Endothelial cell of umbilical vein (primary cell): ENCODE measurements at regions of chr6 and their contacts with region 1.

Region 1: GRCh38 chr6:30742316-30743098 is at the start of gene FLOT1:
- DNase-seq: peak; percentile 94
- H3K4me3 ChIP-seq: peak within 1 kb of the TSS; percentile 37 to 83 (median 80)
- H3K27ac ChIP-seq: peak within 1 kb of the TSS; percentile 89
- H3K4me1 ChIP-seq: peaks cover 47% of the 10 kb centered on the region
- H3K27me3 ChIP-seq: no peaks in the 10 kb centered on the region
- CTCF ChIP-seq: no peak
- POLR2A ChIP-seq: peak; percentile 83
- total RNA-seq, gene FLOT1: 141 and 145 TPM in 2 replicates

Region 2: DNA sequence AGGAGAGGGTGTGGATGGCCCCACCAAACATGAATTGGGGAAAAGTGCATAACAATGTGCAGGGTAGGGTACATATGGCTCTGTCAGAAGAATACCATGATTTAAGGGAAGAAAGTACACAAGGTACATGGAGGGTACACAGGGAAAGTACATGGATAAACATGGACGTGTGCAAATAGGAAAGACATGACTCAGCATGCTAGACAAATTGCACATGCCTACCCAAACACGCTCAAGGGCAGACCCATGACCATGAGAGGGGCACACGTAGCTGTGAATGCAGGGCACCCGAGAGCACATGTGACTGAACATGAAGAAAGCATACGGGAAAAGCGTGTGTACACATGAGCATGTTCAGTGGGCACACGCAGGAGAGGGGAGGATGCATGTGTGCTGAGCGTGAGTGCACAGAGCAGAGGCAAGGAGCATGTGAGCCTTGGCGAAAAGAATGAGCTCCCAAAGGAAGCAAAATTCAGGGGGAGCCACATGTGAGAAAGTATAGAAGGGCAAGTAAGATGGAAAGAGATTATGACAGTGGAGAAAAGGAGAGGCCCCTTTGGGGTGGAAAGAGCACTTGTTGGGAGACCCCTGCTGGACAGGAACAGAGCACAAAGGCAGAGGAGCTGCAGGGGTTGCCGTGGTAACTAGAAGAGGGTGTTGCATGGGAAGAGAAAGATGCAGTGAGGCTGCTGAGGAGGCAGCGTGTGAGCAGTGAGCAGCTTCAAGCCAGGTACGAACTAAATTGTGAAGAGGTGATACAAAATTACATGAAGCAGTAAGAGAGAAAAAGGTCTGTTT is 1139.7 kb before region 1 on chr6:
- CTCF ChIA-PET with region 1: no interaction called
- POLR2A ChIA-PET with region 1: no interaction called
- dilution Hi-C with region 1: no loop called
- intact Hi-C with region 1: no loop called
- DNase-seq: no peak
- H3K4me3 ChIP-seq: no peak overlapping the region
- H3K27ac ChIP-seq: no peak overlapping the region
- H3K4me1 ChIP-seq: no peaks in the 10 kb centered on the region
- H3K27me3 ChIP-seq: no peaks in the 10 kb centered on the region
- CTCF ChIP-seq: peak in 1 of 2 donors; percentile 17
- POLR2A ChIP-seq: no peak

Region 3: GRCh38 chr6:30340589-30341054 is 401.9 kb before region 1 on chr6:
- CTCF ChIA-PET with region 1: no interaction called
- POLR2A ChIA-PET with region 1: no interaction called
- dilution Hi-C with region 1: no loop called
- intact Hi-C with region 1: no loop called
- DNase-seq: no peak
- H3K4me3 ChIP-seq: no peak overlapping the region
- H3K27ac ChIP-seq: no peak overlapping the region
- H3K4me1 ChIP-seq: peaks cover 3% of the 10 kb centered on the region
- H3K27me3 ChIP-seq: no peaks in the 10 kb centered on the region
- CTCF ChIP-seq: no peak
- POLR2A ChIP-seq: no peak

Region 4: GRCh38 chr6:30656513-30656912 is 86.0 kb before region 1 on chr6:
- CTCF ChIA-PET with region 1: no interaction called
- POLR2A ChIA-PET with region 1: no interaction called
- dilution Hi-C with region 1: no loop called
- intact Hi-C with region 1: no loop called
- DNase-seq: no peak
- H3K4me3 ChIP-seq: no peak overlapping the region
- H3K27ac ChIP-seq: no peak overlapping the region
- H3K4me1 ChIP-seq: no peaks in the 10 kb centered on the region
- H3K27me3 ChIP-seq: no peaks in the 10 kb centered on the region
- CTCF ChIP-seq: no peak
- POLR2A ChIP-seq: no peak

Region 5: GRCh38 chr6:30678964-30679726 is 63.4 kb before region 1 on chr6:
- CTCF ChIA-PET with region 1: interaction called, 12 read pairs
- POLR2A ChIA-PET with region 1: no interaction called
- dilution Hi-C with region 1: no loop called
- intact Hi-C with region 1: no loop called
- DNase-seq: peak; percentile 85
- H3K4me3 ChIP-seq: peak overlapping the region in 2 of 3 experiments; percentile 8 to 27
- H3K27ac ChIP-seq: peak overlapping the region; percentile 2
- H3K4me1 ChIP-seq: peaks cover 31% of the 10 kb centered on the region
- H3K27me3 ChIP-seq: no peaks in the 10 kb centered on the region
- CTCF ChIP-seq: peak; percentile 95 to 96
- POLR2A ChIP-seq: no peak

Region 6: DNA sequence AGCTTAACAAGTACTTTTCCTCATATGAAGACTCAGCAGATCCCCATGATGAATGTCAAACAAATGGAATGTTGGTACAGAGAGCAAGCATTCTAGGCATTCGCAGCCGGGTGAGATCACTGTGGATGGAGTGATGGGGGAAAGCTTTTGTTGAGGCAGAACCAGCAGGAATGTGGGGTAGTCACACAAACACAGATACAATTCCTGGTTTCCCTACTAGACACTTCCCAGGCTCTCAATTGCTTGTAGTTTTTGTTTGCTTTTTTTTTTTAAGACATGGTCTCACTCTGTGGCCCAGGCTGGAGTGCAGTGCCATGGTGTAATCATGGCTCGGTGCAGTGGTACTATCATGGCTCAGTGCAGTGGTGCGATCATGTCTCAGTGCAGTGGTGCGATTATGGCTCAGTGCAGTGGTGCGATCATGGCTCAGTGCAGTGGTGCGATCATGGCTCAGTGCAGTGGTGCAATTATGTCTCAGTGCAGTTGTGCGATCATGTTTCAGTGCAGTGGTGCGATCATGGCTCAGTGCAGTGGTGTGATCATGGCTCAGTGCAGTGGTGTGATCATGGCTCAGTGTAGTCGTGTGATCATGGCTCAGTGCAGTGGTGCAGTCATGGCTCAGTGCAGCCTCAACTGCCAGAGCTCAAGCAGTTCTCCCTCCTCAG is 17.2 kb after region 1 on chr6:
- CTCF ChIA-PET with region 1: interaction called, 4 read pairs
- POLR2A ChIA-PET with region 1: interaction called, 6 read pairs
- dilution Hi-C with region 1: no loop called
- intact Hi-C with region 1: loop called (anchors 1 kb)
- DNase-seq: peak; percentile 74
- H3K4me3 ChIP-seq: no peak overlapping the region
- H3K27ac ChIP-seq: peak overlapping the region; percentile 91
- H3K4me1 ChIP-seq: peaks cover 34% of the 10 kb centered on the region
- H3K27me3 ChIP-seq: no peaks in the 10 kb centered on the region
- CTCF ChIP-seq: no peak
- POLR2A ChIP-seq: no peak

Region 7: GRCh38 chr6:30800871-30801270 is 58.4 kb after region 1 on chr6:
- CTCF ChIA-PET with region 1: no interaction called
- POLR2A ChIA-PET with region 1: interaction called, 14 read pairs
- dilution Hi-C with region 1: no loop called
- intact Hi-C with region 1: no loop called
- DNase-seq: peak; percentile 98
- H3K4me3 ChIP-seq: no peak overlapping the region
- H3K27ac ChIP-seq: peak overlapping the region; percentile 61
- H3K4me1 ChIP-seq: peaks cover 22% of the 10 kb centered on the region
- H3K27me3 ChIP-seq: no peaks in the 10 kb centered on the region
- CTCF ChIP-seq: no peak
- POLR2A ChIP-seq: peak; percentile 37

Region 8: DNA sequence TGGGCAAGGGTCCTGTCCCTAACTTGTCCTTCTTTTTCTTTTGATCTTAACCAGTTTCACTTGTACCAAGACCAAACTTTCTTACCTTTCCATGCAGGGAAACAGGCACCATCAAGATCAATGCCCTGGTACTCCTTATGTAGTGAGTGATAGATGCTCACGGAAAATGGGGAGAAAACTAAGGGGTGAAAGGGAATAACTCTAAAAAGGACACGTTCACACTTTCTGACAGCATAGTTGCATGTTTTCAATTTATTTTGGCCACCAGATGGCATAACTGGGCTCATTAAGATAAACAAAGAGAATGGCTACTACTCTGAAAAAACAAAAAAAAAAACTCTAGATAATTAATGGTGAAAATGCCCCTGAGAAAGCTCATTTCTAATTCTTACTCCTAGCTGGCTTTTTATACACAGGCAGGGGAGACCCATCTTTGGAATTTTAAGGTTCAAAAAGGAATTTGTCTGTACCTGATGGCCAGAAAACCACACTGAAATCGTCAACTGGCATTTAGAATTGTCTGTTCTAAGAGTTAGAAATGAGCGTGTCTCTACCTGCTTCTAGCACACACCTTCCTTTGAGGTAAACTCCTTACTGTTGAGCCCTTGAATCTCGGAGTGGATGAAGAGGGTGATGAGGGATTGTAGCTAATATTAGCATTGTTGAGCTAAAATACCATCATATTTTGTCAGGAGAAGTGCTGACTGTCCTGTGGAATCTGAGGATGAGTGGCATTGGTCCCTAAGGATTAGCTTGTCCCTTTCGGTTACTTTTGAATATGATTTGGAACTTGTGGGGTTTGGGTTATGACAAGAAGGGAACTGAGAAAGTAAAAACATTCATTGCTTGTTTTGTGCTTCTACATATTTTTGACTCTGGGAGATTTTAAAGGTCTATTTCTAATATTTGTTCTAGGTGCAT is 79.6 kb after region 1 on chr6:
- CTCF ChIA-PET with region 1: interaction called, 10 read pairs
- POLR2A ChIA-PET with region 1: interaction called, 12 read pairs
- dilution Hi-C with region 1: no loop called
- intact Hi-C with region 1: loop called (anchors 1 kb)
- DNase-seq: peak; percentile 75
- H3K4me3 ChIP-seq: no peak overlapping the region
- H3K27ac ChIP-seq: peak overlapping the region; percentile 21
- H3K4me1 ChIP-seq: peaks cover 36% of the 10 kb centered on the region
- H3K27me3 ChIP-seq: no peaks in the 10 kb centered on the region
- CTCF ChIP-seq: peak; percentile 49 to 52
- POLR2A ChIP-seq: no peak